Kidney (tissue), 22 donors: ENCODE measurements at regions of chrX and their contacts with region 1.

Region 1: DNA sequence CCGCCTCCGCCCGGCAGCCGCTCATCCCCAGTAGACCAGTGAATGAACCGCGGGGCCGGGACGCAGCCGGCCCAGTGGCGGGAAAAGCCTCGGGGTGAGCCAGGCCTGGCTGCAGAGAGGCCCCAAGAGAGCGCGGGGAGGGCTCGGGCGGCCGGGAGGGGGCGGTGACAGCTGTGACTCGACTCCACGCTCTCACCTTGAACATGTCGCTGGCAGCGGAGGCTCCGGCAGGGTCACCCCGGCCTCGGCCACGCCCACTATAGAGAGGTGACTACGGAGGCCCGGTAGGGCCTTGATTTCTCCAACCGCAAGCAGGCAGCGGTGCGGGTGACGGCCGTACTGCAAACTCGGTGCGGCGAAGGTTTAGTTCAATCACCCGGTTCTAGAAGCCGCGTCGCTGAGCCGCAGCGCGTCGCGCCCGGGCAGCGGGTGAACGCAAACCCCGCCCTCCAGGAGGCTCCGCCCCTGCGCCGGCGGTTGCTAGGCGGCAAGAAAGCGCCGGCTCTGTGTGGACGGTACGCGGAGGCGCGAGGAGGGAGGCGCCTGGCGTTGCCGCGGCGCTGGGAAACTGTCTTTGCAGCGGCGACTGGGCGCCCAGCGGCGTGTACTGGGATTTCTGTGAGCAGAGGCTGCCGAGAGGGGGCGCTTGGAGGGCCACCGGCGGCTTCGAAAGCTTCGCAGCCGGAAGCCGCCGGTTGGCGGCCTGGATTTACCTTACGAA is at the starts of genes APOO and CXorf58:
- DNase-seq: peak; percentile 94 to 97 (median 95)
- H3K4me3 ChIP-seq: peak within 1 kb of the TSS; percentile 53 to 68 (median 64)
- H3K27ac ChIP-seq: peak within 1 kb of the TSS; percentile 89 to 93
- H3K4me1 ChIP-seq: peaks cover 0 to 4% (median 0%) of the 10 kb centered on the region in 3 donors
- H3K27me3 ChIP-seq: peaks cover 5% of the 10 kb centered on the region
- CTCF ChIP-seq: peak; percentile 79
- total RNA-seq, gene APOO: 30.4 TPM
- total RNA-seq, gene CXorf58: not detected

Region 2: DNA sequence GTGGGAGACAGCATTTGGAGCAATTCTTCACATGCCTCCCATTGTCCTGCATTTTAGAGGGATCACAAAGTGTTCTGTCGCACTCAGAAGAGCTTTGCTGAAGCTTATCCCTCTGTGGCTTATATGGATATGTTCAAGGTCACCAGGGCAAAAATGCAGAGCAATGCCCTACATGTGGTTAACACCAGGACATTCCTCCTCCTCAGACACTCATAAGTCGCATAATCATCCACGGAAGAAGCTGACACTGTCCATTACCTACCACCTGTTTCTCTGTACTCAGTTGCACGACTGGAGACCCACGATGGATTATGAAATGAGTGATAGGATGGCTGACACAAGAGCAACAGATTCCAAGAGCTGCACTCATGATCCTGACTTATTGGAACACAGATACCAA is 309.1 kb before region 1 on chrX:
- intact Hi-C with region 1: no loop called
- DNase-seq: no peak
- H3K4me3 ChIP-seq: no peak overlapping the region
- H3K27ac ChIP-seq: no peak overlapping the region
- H3K4me1 ChIP-seq: no peaks in the 10 kb centered on the region
- H3K27me3 ChIP-seq: no peaks in the 10 kb centered on the region
- CTCF ChIP-seq: no peak

Region 3: GRCh38 chrX:23699636-23700194 is 207.9 kb before region 1 on chrX:
- intact Hi-C with region 1: loop called (anchors 10 kb)
- DNase-seq: peak in 1 of 5 donors; percentile 0
- H3K4me3 ChIP-seq: no peak overlapping the region
- H3K27ac ChIP-seq: no peak overlapping the region
- H3K4me1 ChIP-seq: no peaks in the 10 kb centered on the region
- H3K27me3 ChIP-seq: no peaks in the 10 kb centered on the region
- CTCF ChIP-seq: no peak

Region 4: GRCh38 chrX:23756157-23756559 is 151.5 kb before region 1 on chrX:
- intact Hi-C with region 1: no loop called
- DNase-seq: peak in 3 of 5 donors; percentile 40 to 64 (median 41)
- H3K4me3 ChIP-seq: no peak overlapping the region
- H3K27ac ChIP-seq: no peak overlapping the region
- H3K4me1 ChIP-seq: no peaks in the 10 kb centered on the region
- H3K27me3 ChIP-seq: no peaks in the 10 kb centered on the region
- CTCF ChIP-seq: peak; percentile 37

Region 5: GRCh38 chrX:23766650-23767551 is 140.8 kb before region 1 on chrX:
- intact Hi-C with region 1: no loop called
- DNase-seq: peak in 1 of 5 donors; percentile 38
- H3K4me3 ChIP-seq: peak overlapping the region in 1 of 3 donors; percentile 44
- H3K27ac ChIP-seq: peak overlapping the region in 1 of 2 donors; percentile 11
- H3K4me1 ChIP-seq: peaks cover 0 to 2% (median 0%) of the 10 kb centered on the region in 3 donors
- H3K27me3 ChIP-seq: no peaks in the 10 kb centered on the region
- CTCF ChIP-seq: no peak

Region 6: GRCh38 chrX:23782863-23783568 is 124.6 kb before region 1 on chrX and contains the start of gene SAT1:
- intact Hi-C with region 1: loop called (anchors 10 kb)
- DNase-seq: peak; percentile 94 to 99 (median 95)
- H3K4me3 ChIP-seq: peak within 1 kb of the TSS; percentile 93 to 94 (median 93)
- H3K27ac ChIP-seq: peak within 1 kb of the TSS; percentile 91 to 95
- H3K4me1 ChIP-seq: no peaks in the 10 kb centered on the region
- H3K27me3 ChIP-seq: no peaks in the 10 kb centered on the region
- CTCF ChIP-seq: peak; percentile 49
- total RNA-seq, gene SAT1: 417 TPM

Region 7: GRCh38 chrX:24364851-24365538 is 457.3 kb after region 1 on chrX:
- intact Hi-C with region 1: no loop called
- DNase-seq: no peak
- H3K4me3 ChIP-seq: no peak overlapping the region
- H3K27ac ChIP-seq: no peak overlapping the region
- H3K4me1 ChIP-seq: no peaks in the 10 kb centered on the region
- H3K27me3 ChIP-seq: peaks cover 4% of the 10 kb centered on the region
- CTCF ChIP-seq: no peak